ENCODE measurements at regions of chr17 and their contacts with region 1.

Region 1: GRCh38 chr17:8300627-8301242 is 5.5 kb upstream of the SLC25A35 start:
- DNase-seq: no peak
- H3K4me3 ChIP-seq: no peak overlapping the region
- H3K27ac ChIP-seq: no peak overlapping the region
- H3K27me3 ChIP-seq: no peaks in the 10 kb centered on the region
- CTCF ChIP-seq: peak; percentile 90

Region 2: DNA sequence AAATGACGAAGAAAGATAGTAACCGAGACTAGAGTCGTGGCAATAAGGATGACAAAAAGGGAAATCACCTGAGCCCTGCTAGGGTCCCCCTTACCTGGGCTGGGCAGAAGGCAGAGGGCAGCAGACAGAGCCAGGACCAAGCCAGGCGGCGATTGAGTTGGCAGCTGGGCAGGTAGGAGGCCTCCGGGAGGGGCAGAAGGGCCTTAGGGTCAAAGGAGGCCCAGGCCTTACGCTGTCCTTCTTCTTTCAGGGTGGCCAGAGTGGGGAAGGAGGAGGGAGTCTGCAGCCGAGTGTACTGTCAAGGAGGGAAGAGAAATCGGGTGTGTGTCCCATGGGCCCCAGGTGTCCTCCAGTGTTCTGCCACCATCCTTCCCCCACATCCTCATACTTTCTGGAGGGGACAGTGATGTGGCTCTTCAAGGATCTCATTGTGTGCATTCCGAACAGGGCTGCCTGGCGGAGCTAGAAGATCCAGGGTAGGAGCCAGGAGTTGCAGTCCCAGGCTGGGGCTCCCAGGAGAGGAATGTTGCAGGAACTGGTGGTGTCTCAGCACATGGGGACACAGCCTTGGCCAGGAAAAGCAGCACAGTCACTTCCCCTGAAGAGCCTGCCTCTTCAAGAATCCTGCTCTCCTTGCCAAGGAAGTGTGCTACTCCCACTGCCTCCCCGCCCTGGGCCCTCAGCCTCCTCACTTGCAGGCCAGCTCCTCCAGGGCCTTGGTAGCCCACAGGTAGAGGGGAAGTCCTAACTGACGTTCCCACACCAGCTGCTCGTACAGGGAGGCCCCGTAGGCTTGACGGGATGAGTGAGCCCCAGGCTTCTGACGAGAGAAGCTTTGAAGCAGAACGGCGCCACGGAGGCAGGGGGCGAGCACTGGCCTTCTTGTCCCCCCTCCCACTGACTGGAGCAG is 66.1 kb before region 1 on chr17:
- CTCF ChIA-PET with region 1: no interaction called
- POLR2A ChIA-PET with region 1: no interaction called
- DNase-seq: no peak
- H3K4me3 ChIP-seq: no peak overlapping the region
- H3K27ac ChIP-seq: no peak overlapping the region
- H3K27me3 ChIP-seq: no peaks in the 10 kb centered on the region
- CTCF ChIP-seq: no peak

Region 3: GRCh38 chr17:8318010-8318935 is 17.5 kb after region 1 on chr17:
- CTCF ChIA-PET with region 1: interaction called, 11 read pairs
- POLR2A ChIA-PET with region 1: no interaction called
- DNase-seq: no peak
- H3K4me3 ChIP-seq: no peak overlapping the region
- H3K27ac ChIP-seq: no peak overlapping the region
- H3K27me3 ChIP-seq: peaks cover 54% of the 10 kb centered on the region
- CTCF ChIP-seq: no peak

Region 4: DNA sequence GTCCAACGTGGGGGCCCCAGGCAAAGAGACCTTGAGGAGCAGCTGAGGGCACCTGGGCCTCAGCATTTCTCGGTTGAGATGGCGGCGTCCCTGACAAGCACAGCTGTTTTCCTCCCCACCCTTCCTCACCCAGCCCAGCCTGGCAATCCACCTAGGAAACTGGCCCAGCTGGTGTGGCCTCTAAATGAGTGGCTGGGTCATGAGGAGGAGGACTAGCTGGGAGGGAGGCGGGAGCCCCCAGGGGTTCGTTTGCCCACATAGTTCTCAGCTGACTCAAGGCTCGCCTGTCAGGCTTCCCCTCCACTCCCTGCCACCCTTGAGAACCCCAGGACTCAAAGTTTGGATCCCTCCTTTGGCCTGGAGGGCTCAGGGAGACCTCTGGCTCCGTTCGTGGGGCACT is 91.0 kb after region 1 on chr17:
- CTCF ChIA-PET with region 1: no interaction called
- POLR2A ChIA-PET with region 1: no interaction called
- DNase-seq: no peak
- H3K4me3 ChIP-seq: no peak overlapping the region
- H3K27ac ChIP-seq: no peak overlapping the region
- H3K27me3 ChIP-seq: no peaks in the 10 kb centered on the region
- CTCF ChIP-seq: no peak

Measured in AG04450 (cell line).